Activated CD8-positive, alpha-beta memory T cell treated with anti-CD3 and anti-CD28 coated beads, Interleukin-2, amount 10 ng/mL, durations not matched to agents 7 days and 5 days (primary cell): ENCODE measurements at regions of chr3 and their contacts with region 1.

Region 1: GRCh38 chr3:8769088-8769822 is at the start of gene OXTR:
- DNase-seq: peak; percentile 67
- ATAC-seq: peak; percentile 92
- H3K4me3 Mint-ChIP-seq: peak within 1 kb of the TSS; percentile 32
- H3K27ac Mint-ChIP-seq: no peak within 1 kb of the TSS
- H3K4me1 Mint-ChIP-seq: peaks cover 18% of the 10 kb centered on the region
- H3K27me3 Mint-ChIP-seq: peaks cover 50% of the 10 kb centered on the region
- total RNA-seq, gene OXTR: 1.3 to 1.4 TPM

Region 2: GRCh38 chr3:8663177-8664061 is 105.8 kb before region 1 on chr3:
- CTCF ChIA-PET with region 1: interaction called, 10 read pairs
- DNase-seq: peak; percentile 55
- ATAC-seq: no peak
- H3K4me3 Mint-ChIP-seq: no peak overlapping the region
- H3K27ac Mint-ChIP-seq: no peak overlapping the region
- H3K4me1 Mint-ChIP-seq: no peaks in the 10 kb centered on the region
- H3K27me3 Mint-ChIP-seq: peaks cover 15% of the 10 kb centered on the region

Region 3: DNA sequence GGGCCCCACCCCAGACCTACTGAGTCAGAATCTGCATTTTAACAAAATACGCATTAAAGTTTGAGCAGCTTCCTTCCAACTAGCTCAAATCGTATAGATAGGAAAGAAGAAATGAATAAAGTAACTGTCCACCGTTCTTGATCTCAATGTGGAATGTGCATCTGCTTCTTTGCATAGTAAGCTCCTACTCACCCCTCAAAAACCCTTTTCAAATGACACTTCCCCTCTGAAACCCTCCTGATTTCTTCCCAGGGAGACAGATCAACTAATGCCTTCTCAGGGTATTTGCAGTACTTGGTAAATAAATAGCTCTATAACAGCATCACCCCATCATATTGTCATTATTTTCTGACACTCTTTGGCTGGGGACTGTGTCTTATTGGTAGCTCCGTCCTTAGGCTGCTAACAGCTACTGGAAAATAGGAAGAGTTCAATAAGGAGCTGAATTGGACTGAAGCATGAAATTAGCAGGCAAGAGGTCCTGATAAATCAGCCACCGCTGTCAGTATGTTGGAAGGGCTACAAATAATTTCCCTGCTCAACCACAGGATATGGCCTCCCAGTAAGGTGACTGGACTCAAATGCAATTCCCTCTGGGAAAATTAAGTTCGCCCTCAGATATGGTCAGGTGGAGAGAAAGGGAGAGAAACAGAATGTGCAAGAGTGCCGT is 10.1 kb before region 1 on chr3:
- CTCF ChIA-PET with region 1: interaction called, 10 read pairs
- DNase-seq: no peak
- ATAC-seq: no peak
- H3K4me3 Mint-ChIP-seq: no peak overlapping the region
- H3K27ac Mint-ChIP-seq: no peak overlapping the region
- H3K4me1 Mint-ChIP-seq: no peaks in the 10 kb centered on the region
- H3K27me3 Mint-ChIP-seq: peaks cover 7% of the 10 kb centered on the region